Mammary epithelial cell (primary cell): ENCODE measurements at regions of chr3 and their contacts with region 1.

Region 1: GRCh38 chr3:149527531-149528339 is 53.2 kb downstream of the TM4SF4 start:
- DNase-seq: no peak
- H3K4me3 ChIP-seq: no peak overlapping the region
- H3K27ac ChIP-seq: no peak overlapping the region
- H3K4me1 ChIP-seq: peaks cover 14% of the 10 kb centered on the region
- H3K27me3 ChIP-seq: no peaks in the 10 kb centered on the region
- CTCF ChIP-seq: no peak

Region 2: GRCh38 chr3:149031096-149031495 is 496.6 kb before region 1 on chr3:
- CTCF ChIA-PET with region 1: no interaction called
- dilution Hi-C with region 1: no loop called
- in situ Hi-C with region 1: no loop called
- intact Hi-C with region 1: no loop called
- DNase-seq: no peak
- H3K4me3 ChIP-seq: no peak overlapping the region
- H3K27ac ChIP-seq: no peak overlapping the region
- H3K4me1 ChIP-seq: no peaks in the 10 kb centered on the region
- H3K27me3 ChIP-seq: no peaks in the 10 kb centered on the region
- CTCF ChIP-seq: no peak

Region 3: GRCh38 chr3:149104516-149104915 is 423.2 kb before region 1 on chr3:
- CTCF ChIA-PET with region 1: no interaction called
- dilution Hi-C with region 1: no loop called
- in situ Hi-C with region 1: no loop called
- intact Hi-C with region 1: no loop called
- DNase-seq: no peak
- H3K4me3 ChIP-seq: no peak overlapping the region
- H3K27ac ChIP-seq: no peak overlapping the region
- H3K4me1 ChIP-seq: peaks cover 5% of the 10 kb centered on the region
- H3K27me3 ChIP-seq: no peaks in the 10 kb centered on the region
- CTCF ChIP-seq: no peak

Region 4: DNA sequence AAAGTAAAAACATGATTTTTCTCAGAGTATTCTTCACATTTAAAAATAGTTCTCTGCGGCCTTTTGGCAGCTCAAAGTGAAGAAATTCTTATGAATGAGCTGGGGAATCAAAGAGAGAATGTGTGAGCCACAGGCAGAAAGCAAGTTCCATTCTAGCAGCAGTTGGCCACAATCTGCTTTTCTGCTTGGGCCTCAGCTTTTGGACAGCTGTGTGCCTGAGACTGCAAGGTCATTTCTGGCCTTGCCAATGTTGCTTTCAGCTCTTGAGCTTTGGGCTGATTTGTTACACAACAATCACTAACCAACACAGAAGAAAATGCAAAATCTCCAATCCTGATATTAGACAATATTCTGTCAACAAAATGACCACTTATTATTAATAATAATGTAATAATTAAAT is 67.6 kb before region 1 on chr3:
- CTCF ChIA-PET with region 1: no interaction called
- dilution Hi-C with region 1: no loop called
- in situ Hi-C with region 1: no loop called
- intact Hi-C with region 1: no loop called
- DNase-seq: no peak
- H3K4me3 ChIP-seq: no peak overlapping the region
- H3K27ac ChIP-seq: no peak overlapping the region
- H3K4me1 ChIP-seq: no peaks in the 10 kb centered on the region
- H3K27me3 ChIP-seq: no peaks in the 10 kb centered on the region
- CTCF ChIP-seq: no peak

Region 5: DNA sequence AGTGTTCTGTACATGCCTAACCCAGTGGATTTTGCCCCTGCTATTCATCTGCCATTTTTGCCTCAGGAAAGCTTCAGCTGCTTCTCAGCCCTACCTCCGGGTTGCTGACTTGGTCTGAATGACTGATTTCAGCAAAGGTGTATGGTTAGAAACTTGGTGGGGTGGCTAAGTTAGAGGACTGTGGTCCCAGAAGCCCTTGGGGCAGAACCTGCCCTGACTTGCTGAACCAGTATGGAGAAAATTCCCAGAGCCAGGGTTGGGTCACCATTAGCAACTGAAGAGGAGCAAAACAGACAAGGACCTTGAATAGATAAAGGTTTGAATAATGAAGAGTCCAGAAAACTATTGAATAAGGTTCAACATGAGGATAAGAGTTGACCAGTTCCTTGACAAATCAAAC is 136.2 kb after region 1 on chr3:
- CTCF ChIA-PET with region 1: no interaction called
- dilution Hi-C with region 1: no loop called
- in situ Hi-C with region 1: no loop called
- intact Hi-C with region 1: no loop called
- DNase-seq: peak; percentile 54
- H3K4me3 ChIP-seq: no peak overlapping the region
- H3K27ac ChIP-seq: no peak overlapping the region
- H3K4me1 ChIP-seq: peaks cover 8% of the 10 kb centered on the region
- H3K27me3 ChIP-seq: no peaks in the 10 kb centered on the region
- CTCF ChIP-seq: no peak

Region 6: GRCh38 chr3:149717391-149718056 is 189.8 kb after region 1 on chr3:
- CTCF ChIA-PET with region 1: interaction called, 7 read pairs
- dilution Hi-C with region 1: no loop called
- in situ Hi-C with region 1: loop called in 1 of 2 experiments (anchors 5 kb)
- intact Hi-C with region 1: loop called (anchors 1 kb)
- DNase-seq: peak; percentile 59
- H3K4me3 ChIP-seq: no peak overlapping the region
- H3K27ac ChIP-seq: no peak overlapping the region
- H3K4me1 ChIP-seq: peaks cover 8% of the 10 kb centered on the region
- H3K27me3 ChIP-seq: no peaks in the 10 kb centered on the region
- CTCF ChIP-seq: peak; percentile 65 to 71